ENCODE measurements at regions of chr4 and their contacts with region 1.

Region 1: GRCh38 chr4:1505511-1506460 is 99.5 kb upstream of the NKX1-1 start:
- DNase-seq: no peak
- H3K4me3 ChIP-seq: no peak overlapping the region
- H3K27ac ChIP-seq: no peak overlapping the region
- H3K4me1 ChIP-seq: no peaks in the 10 kb centered on the region
- H3K27me3 ChIP-seq: peaks cover 26% of the 10 kb centered on the region
- CTCF ChIP-seq: no peak

Region 2: DNA sequence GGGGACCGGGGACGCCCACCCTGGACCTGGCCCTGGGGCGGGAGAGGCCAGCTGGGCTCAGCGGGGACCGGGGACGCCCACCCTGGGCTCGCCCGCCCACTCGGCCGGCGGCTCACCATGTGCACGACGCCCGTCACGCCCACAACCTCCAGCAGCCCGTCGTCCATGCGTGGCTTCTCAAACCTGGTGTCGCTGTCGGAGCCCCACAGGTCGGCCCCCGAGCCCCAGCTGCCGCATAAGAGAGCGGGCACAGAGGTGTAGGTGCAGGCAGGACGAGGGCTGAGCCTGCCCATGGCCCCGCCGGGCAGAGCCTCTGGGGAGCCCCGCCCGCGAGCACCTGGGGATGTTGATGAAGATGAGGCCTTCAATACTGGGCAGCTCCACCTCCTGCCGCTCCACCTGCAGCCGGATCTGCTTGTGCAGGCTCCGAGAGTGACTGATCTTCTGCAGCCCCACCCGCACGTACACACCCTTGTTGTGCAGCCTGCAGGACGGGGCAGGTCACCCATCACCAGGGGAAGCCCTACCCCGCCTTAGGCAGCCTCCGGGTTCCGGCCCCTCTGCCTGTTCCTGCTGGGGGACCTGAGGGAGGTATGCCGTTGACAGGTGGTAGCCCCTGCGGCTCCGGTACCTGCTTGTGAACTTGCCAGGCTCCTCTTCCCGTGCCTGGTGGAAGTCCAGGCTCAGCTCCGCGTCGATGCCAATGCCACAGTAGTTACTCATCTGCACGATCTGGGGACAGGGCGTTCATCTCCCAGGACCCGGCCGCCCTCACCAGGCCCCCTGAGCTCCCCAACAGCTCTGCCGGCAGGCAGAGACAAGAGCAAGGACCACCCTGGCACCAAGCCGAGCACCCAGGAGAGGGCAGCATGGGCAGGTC is 544.2 kb before region 1 on chr4:
- CTCF ChIA-PET with region 1: no interaction called
- POLR2A ChIA-PET with region 1: no interaction called
- intact Hi-C with region 1: no loop called
- DNase-seq: no peak
- H3K4me3 ChIP-seq: no peak overlapping the region
- H3K27ac ChIP-seq: no peak overlapping the region
- H3K4me1 ChIP-seq: no peaks in the 10 kb centered on the region
- H3K27me3 ChIP-seq: no peaks in the 10 kb centered on the region
- CTCF ChIP-seq: no peak

Region 3: GRCh38 chr4:1552451-1552850 is 46.7 kb after region 1 on chr4:
- CTCF ChIA-PET with region 1: interaction called, 12 read pairs
- POLR2A ChIA-PET with region 1: no interaction called
- intact Hi-C with region 1: no loop called
- DNase-seq: no peak
- H3K4me3 ChIP-seq: no peak overlapping the region
- H3K27ac ChIP-seq: no peak overlapping the region
- H3K4me1 ChIP-seq: no peaks in the 10 kb centered on the region
- H3K27me3 ChIP-seq: peaks cover 6% of the 10 kb centered on the region
- CTCF ChIP-seq: no peak

Region 4: GRCh38 chr4:1939664-1940509 is 434.1 kb after region 1 on chr4:
- CTCF ChIA-PET with region 1: no interaction called
- POLR2A ChIA-PET with region 1: no interaction called
- intact Hi-C with region 1: no loop called
- DNase-seq: peak; percentile 17
- H3K4me3 ChIP-seq: no peak overlapping the region
- H3K27ac ChIP-seq: no peak overlapping the region
- H3K4me1 ChIP-seq: peaks cover 3% of the 10 kb centered on the region
- H3K27me3 ChIP-seq: no peaks in the 10 kb centered on the region
- CTCF ChIP-seq: no peak

Measured in A673 (cell line).